ENCODE measurements at regions of chr1 and their contacts with region 1.

Region 1: GRCh38 chr1:234065794-234066447 is 161.4 kb downstream of the SLC35F3 start:
- DNase-seq: peak; percentile 88
- H3K4me3 Mint-ChIP-seq: no peak overlapping the region
- H3K27ac Mint-ChIP-seq: no peak overlapping the region
- H3K4me1 Mint-ChIP-seq: no peaks in the 10 kb centered on the region
- H3K27me3 Mint-ChIP-seq: no peaks in the 10 kb centered on the region
- CTCF ChIP-seq: peak; percentile 91

Region 2: GRCh38 chr1:233440951-233441401 is 624.9 kb before region 1 on chr1:
- CTCF ChIA-PET with region 1: interaction called, 14 read pairs
- intact Hi-C with region 1: loop called (anchors 1 kb)
- DNase-seq: peak; percentile 40
- H3K4me3 Mint-ChIP-seq: no peak overlapping the region
- H3K27ac Mint-ChIP-seq: no peak overlapping the region
- H3K4me1 Mint-ChIP-seq: no peaks in the 10 kb centered on the region
- H3K27me3 Mint-ChIP-seq: no peaks in the 10 kb centered on the region
- CTCF ChIP-seq: peak; percentile 67

Region 3: GRCh38 chr1:233695901-233696300 is 370.0 kb before region 1 on chr1:
- CTCF ChIA-PET with region 1: no interaction called
- intact Hi-C with region 1: no loop called
- DNase-seq: no peak
- H3K4me3 Mint-ChIP-seq: no peak overlapping the region
- H3K27ac Mint-ChIP-seq: no peak overlapping the region
- H3K4me1 Mint-ChIP-seq: no peaks in the 10 kb centered on the region
- H3K27me3 Mint-ChIP-seq: no peaks in the 10 kb centered on the region
- CTCF ChIP-seq: no peak

Region 4: DNA sequence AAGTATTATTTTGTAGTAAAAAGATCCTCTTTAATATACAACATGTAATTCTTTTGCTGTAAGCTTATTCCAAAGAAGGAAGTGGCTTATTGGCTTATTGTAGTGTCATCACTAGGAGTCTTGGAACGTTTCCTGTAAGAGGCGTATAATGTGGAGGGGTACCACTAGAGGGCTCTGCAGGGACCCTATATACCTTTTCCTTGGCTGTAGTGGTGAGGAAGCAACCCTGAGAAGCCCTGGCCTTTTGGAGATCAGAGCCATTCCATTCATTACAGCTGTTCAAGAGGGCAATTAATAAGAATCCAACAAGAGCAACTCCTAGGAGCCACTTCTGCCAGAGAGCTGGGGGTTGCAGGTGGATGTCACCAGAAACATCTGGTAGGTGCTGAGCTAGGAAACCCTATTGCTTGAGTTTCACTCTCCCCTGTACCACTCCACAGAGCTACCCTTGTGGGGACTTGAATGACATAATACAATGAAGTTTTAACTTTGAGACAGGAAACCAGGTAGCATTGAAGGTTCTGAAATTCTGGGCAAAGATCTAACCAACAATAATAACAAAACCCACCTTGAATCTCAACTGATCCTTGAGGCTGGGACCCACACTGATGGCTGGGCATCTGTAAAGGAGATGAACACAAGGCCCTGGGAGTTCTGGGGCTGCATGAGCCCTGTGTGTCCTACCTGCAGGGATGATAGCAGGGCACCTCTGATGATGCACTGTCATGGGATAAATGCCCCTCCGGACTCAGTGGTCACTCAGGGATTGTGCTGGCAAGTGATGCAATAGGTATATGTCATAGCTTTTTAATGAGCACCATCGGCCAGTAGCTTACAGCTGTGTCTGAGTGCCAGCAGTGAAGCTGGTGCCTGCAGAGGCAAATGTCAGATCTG is 147.1 kb after region 1 on chr1:
- CTCF ChIA-PET with region 1: no interaction called
- intact Hi-C with region 1: no loop called
- DNase-seq: peak; percentile 33
- H3K4me3 Mint-ChIP-seq: peak overlapping the region; percentile 71
- H3K27ac Mint-ChIP-seq: no peak overlapping the region
- H3K4me1 Mint-ChIP-seq: no peaks in the 10 kb centered on the region
- H3K27me3 Mint-ChIP-seq: peaks cover 69% of the 10 kb centered on the region
- CTCF ChIP-seq: no peak

Measured in Calu3 (cell line).